GM12878 (cell line): ENCODE measurements at regions of chr4 and their contacts with region 1.

Region 1: DNA sequence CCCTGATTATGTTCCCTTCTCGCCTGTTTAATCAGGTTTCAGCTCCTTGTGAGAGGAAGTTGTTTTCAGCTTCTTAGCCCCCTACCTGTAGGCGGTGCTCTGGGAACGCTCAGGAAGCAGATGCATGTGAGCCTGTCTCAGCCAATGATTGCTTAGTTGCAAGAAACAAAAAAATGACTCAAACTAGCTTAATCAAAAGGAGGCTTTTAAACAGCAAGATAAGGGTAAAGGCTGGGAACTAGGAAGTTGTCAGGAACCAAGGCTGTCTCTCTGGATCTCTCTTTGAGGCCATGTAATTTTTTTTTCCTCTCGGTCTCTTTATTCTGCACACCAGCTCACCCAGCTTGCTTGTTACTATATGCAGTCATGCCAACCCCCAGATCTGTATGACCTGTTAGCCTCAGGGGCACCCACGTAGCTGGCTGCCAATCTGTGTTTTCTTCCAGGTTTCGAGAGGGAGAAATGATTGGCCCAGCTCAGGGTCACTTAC is 109.1 kb downstream of the PTTG2 start:
- DNase-seq: no peak
- ATAC-seq: peak; percentile 63
- H3K4me3 ChIP-seq: no peak overlapping the region
- H3K27ac ChIP-seq: peak overlapping the region; percentile 22
- H3K4me1 ChIP-seq: peaks cover 19% of the 10 kb centered on the region
- H3K27me3 ChIP-seq: no peaks in the 10 kb centered on the region
- CTCF ChIP-seq: peak; percentile 48 to 79 (median 67); a peak in 5 of 6 replicates
- EP300 ChIP-seq: no peak
- POLR2A ChIP-seq: no peak
- RAD21 ChIP-seq: peak; percentile 92

Region 2: GRCh38 chr4:38174801-38175200 is 105.5 kb after region 1 on chr4:
- CTCF ChIA-PET with region 1: interaction called, 202 read pairs
- POLR2A ChIA-PET with region 1: interaction called, 4 read pairs
- RAD21 ChIA-PET with region 1: interaction called, 173 read pairs
- SMC1A ChIA-PET with region 1: interaction called, 53 read pairs
- in situ Hi-C with region 1: no loop called
- intact Hi-C with region 1: no loop called
- DNase-seq: no peak
- ATAC-seq: no peak
- H3K4me3 ChIP-seq: no peak overlapping the region
- H3K27ac ChIP-seq: no peak overlapping the region
- H3K4me1 ChIP-seq: peaks cover 36% of the 10 kb centered on the region
- H3K27me3 ChIP-seq: no peaks in the 10 kb centered on the region
- CTCF ChIP-seq: no peak
- EP300 ChIP-seq: no peak
- POLR2A ChIP-seq: no peak
- RAD21 ChIP-seq: no peak

Region 3: GRCh38 chr4:38663801-38664705 is 594.7 kb after region 1 on chr4 and contains the start of gene KLF3:
- CTCF ChIA-PET with region 1: interaction called, 11 read pairs
- POLR2A ChIA-PET with region 1: no interaction called
- RAD21 ChIA-PET with region 1: interaction called, 4 read pairs
- SMC1A ChIA-PET with region 1: interaction called, 6 read pairs
- in situ Hi-C with region 1: no loop called
- intact Hi-C with region 1: no loop called
- DNase-seq: no peak
- ATAC-seq: peak; percentile 73
- H3K4me3 ChIP-seq: peak within 1 kb of the TSS; percentile 78
- H3K27ac ChIP-seq: peak within 1 kb of the TSS; percentile 68
- H3K4me1 ChIP-seq: peaks cover 12% of the 10 kb centered on the region
- H3K27me3 ChIP-seq: peaks cover 0 to 4% of the 10 kb centered on the region in 2 experiments; a peak in 1 of 4 replicates
- CTCF ChIP-seq: no peak
- EP300 ChIP-seq: no peak
- POLR2A ChIP-seq: peak; percentile 67
- RAD21 ChIP-seq: no peak
- polyA plus RNA-seq, gene KLF3: 1.4 to 1.5 TPM

Region 4: GRCh38 chr4:38730830-38731646 is 661.7 kb after region 1 on chr4:
- CTCF ChIA-PET with region 1: interaction called, 3 read pairs
- POLR2A ChIA-PET with region 1: no interaction called
- RAD21 ChIA-PET with region 1: interaction called, 3 read pairs
- SMC1A ChIA-PET with region 1: interaction called, 7 read pairs
- in situ Hi-C with region 1: loop called (anchors 5 kb)
- intact Hi-C with region 1: no loop called
- DNase-seq: peak; percentile 87
- ATAC-seq: peak; percentile 97
- H3K4me3 ChIP-seq: no peak overlapping the region
- H3K27ac ChIP-seq: peak overlapping the region; percentile 57
- H3K4me1 ChIP-seq: peaks cover 16% of the 10 kb centered on the region
- H3K27me3 ChIP-seq: no peaks in the 10 kb centered on the region; a peak in 1 of 4 replicates
- CTCF ChIP-seq: peak; percentile 69 to 96 (median 89)
- EP300 ChIP-seq: peak; percentile 75 to 91; a peak in 3 of 4 replicates
- POLR2A ChIP-seq: no peak
- RAD21 ChIP-seq: peak; percentile 97